GM12878 (cell line): ENCODE measurements at regions of chr5 and their contacts with region 1.

Region 1: DNA sequence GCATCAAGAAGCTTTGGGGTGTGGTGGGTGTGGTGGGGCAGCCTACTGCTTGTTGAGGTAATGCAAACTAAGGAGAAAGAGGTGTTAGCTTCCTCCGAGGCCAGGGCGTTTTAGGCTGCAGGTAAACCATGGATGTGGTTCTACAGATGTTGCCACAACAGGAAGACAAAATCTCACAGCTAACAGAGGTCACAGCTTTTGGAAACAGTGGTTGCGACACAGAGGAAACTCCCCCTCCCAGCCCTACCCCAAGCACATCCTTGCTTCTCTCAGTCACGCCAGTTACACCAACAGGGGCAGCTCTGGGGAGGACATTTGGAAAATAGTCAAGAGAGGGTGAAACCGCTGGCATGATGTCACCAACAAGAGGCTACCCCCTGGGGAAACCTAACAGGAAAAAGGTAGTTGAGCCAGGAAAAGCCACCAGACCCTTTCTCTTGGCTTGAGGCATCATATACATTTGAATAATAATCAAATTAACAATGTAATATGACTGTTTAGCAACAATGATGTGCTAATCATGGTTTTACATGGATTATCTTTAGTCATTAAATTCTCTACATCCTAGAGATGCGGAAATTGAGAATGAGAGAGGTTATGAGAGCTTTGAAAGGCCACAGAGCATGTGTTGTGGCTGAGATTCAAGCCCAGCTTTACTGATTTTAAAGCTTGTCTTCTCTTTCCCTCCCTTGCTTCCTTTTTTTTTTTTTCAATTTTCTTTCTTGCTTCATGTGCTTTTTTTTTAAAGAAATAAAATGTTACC is 82.2 kb upstream of the IL12B start:
- DNase-seq: peak; percentile 62
- ATAC-seq: peak; percentile 87
- H3K4me3 ChIP-seq: no peak overlapping the region
- H3K27ac ChIP-seq: no peak overlapping the region
- H3K4me1 ChIP-seq: peaks cover 19% of the 10 kb centered on the region
- H3K27me3 ChIP-seq: no peaks in the 10 kb centered on the region
- CTCF ChIP-seq: no peak
- EP300 ChIP-seq: peak in 1 of 2 experiments; percentile 51; a peak in 1 of 4 replicates
- POLR2A ChIP-seq: no peak
- RAD21 ChIP-seq: no peak

Region 2: DNA sequence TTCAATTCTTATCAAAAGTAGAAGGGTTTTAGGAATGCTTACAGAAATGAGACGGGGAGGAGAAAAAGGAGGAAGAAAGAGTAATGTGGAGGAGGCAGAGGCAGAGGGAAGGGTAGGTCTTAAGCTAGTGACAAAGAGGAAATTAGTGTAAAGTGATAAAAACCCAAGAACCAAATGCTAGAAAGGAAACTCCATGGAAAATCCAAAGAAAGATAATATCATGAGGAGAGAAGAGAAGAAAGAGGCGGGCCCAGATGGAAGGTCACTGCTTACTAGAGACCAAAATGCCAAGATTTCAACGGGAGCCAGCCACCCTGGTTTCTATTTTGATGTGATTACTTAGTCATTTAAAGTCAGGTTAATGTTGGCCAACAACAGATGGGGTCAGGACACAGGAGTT is 13.5 kb before region 1 on chr5:
- CTCF ChIA-PET with region 1: interaction called, 23 read pairs
- POLR2A ChIA-PET with region 1: interaction called, 4 read pairs
- RAD21 ChIA-PET with region 1: interaction called, 4 read pairs
- SMC1A ChIA-PET with region 1: interaction called, 7 read pairs
- in situ Hi-C with region 1: no loop called
- intact Hi-C with region 1: no loop called
- DNase-seq: no peak
- ATAC-seq: no peak
- H3K4me3 ChIP-seq: no peak overlapping the region
- H3K27ac ChIP-seq: no peak overlapping the region
- H3K4me1 ChIP-seq: no peaks in the 10 kb centered on the region
- H3K27me3 ChIP-seq: no peaks in the 10 kb centered on the region; a peak in 1 of 4 replicates
- CTCF ChIP-seq: no peak
- EP300 ChIP-seq: no peak
- POLR2A ChIP-seq: no peak
- RAD21 ChIP-seq: no peak